ENCODE measurements at regions of chr11 and their contacts with region 1.

Region 1: GRCh38 chr11:118928108-118928870 is 2.6 kb upstream of the BCL9L start:
- DNase-seq: peak; percentile 95
- H3K4me3 ChIP-seq: peak overlapping the region; percentile 79 to 94 (median 86)
- H3K27ac ChIP-seq: peak overlapping the region; percentile 98 to 100 (median 100)
- H3K4me1 ChIP-seq: peaks cover 12 to 48% (median 39%) of the 10 kb centered on the region in 4 donors
- H3K27me3 ChIP-seq: no peaks in the 10 kb centered on the region
- CTCF ChIP-seq: peak; percentile 86 to 99 (median 91)
- EP300 ChIP-seq: no peak
- POLR2A ChIP-seq: peak; percentile 75

Region 2: DNA sequence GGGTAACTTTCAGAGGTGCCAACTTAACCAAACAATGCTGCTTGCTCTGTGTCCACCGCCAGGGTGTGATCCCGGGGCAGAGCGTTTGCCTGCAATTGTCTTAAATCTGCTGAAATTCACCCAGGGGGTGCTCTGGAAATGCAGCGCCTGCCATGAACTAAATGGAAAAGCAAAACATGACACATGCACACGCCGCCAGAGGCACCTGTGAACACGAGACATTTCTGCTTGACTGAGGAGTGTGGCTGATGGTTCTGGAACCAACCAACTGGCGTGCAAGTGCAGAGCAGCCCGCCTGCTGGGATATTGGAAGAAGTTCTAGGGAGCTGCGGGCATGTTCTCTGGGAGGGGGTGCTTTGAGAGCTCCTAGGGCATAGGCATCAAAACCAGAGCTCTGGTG is 1161.7 kb before region 1 on chr11:
- in situ Hi-C with region 1: no loop called
- intact Hi-C with region 1: no loop called
- DNase-seq: no peak
- H3K4me3 ChIP-seq: no peak overlapping the region
- H3K27ac ChIP-seq: no peak overlapping the region
- H3K4me1 ChIP-seq: no peaks in the 10 kb centered on the region
- H3K27me3 ChIP-seq: no peaks in the 10 kb centered on the region
- CTCF ChIP-seq: no peak
- EP300 ChIP-seq: no peak
- POLR2A ChIP-seq: no peak

Region 3: DNA sequence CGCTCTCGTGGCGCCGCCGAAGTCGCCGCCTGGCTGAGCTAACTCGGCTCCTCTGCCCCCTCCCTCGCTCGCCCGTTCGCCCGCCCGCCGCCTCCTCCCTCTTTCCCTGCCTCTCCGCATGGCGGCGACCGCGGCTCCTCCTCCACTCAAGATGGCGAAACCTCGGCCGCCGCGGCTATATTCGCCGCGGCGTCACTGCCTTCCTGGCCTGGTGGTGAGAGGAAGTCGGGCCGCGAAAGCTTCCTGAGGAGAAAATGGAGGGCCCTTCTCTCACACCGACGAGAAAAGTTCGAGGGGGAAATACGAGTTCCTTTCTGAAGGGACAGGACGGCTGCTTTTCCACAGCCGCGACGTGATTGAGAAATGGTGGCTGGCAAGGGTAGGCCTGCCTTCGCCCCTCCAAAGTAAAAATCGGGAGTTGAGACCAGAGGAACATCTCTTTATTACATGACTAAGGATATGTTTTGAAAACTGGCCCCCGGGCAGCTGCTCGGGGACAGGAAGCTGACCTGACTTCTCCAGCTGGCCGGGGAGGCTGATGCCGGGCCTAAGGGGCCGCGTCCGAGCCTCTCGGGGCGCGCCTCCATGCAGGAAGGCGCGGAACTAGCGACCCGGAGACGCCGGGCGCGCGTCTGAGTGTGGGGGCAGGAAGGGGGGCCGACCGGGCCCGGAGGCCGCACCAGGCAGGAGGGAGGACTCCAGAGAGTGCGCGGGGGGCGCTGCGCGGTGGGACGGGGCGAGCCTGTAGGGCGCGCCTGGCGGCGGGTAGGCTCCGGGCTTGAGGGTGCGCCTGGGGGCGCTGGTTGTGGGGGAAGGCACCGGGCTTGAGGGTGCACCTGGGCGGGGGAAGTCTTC is 137.0 kb before region 1 on chr11 and contains the start of gene DDX6:
- in situ Hi-C with region 1: no loop called
- intact Hi-C with region 1: loop called (anchors 1 kb)
- DNase-seq: peak; percentile 92
- H3K4me3 ChIP-seq: peak within 1 kb of the TSS; percentile 63 to 92 (median 80)
- H3K27ac ChIP-seq: peak within 1 kb of the TSS; percentile 96 to 100 (median 98)
- H3K4me1 ChIP-seq: peaks cover 9 to 45% (median 34%) of the 10 kb centered on the region in 4 donors
- H3K27me3 ChIP-seq: no peaks in the 10 kb centered on the region
- CTCF ChIP-seq: peak; percentile 5 to 47 (median 39)
- EP300 ChIP-seq: no peak
- POLR2A ChIP-seq: peak; percentile 96
- total RNA-seq, gene DDX6: 56.1 to 117 (median 86.8) TPM

Region 4: DNA sequence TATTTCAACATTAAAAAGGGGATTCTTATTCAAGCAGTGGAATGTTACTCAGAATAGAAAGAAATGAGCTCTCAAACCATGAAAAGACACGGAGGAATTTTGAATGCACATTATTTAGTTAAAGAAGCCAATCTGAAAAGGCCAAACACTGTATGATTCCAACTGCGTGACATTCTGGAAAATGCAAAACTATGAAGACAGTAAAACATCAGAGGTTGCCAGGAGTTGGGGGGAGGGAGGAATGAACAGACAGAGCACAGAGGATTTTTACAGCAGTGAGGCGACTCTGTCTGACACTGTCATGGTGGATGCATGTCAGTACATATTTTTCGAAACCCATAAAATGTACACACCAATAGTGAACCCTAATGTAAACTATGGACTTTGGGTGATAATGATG is 517.6 kb after region 1 on chr11:
- in situ Hi-C with region 1: no loop called
- intact Hi-C with region 1: no loop called
- DNase-seq: no peak
- H3K4me3 ChIP-seq: no peak overlapping the region
- H3K27ac ChIP-seq: peak overlapping the region; percentile 37 to 57 (median 48)
- H3K4me1 ChIP-seq: peaks cover 0 to 11% (median 0%) of the 10 kb centered on the region in 4 donors
- H3K27me3 ChIP-seq: no peaks in the 10 kb centered on the region
- CTCF ChIP-seq: no peak
- EP300 ChIP-seq: no peak
- POLR2A ChIP-seq: no peak

Measured in transverse colon (tissue), 4 donors.